Stomach (tissue), 19 donors: ENCODE measurements at regions of chr2 and their contacts with region 1.

Region 1: GRCh38 chr2:100832885-100833284 is 12.9 kb downstream of the NPAS2 start:
- DNase-seq: no peak
- H3K4me3 ChIP-seq: no peak overlapping the region
- H3K27ac ChIP-seq: peak overlapping the region; percentile 5 to 76 (median 43)
- H3K4me1 ChIP-seq: peaks cover 27 to 53% (median 44%) of the 10 kb centered on the region in 4 donors
- H3K27me3 ChIP-seq: no peaks in the 10 kb centered on the region
- CTCF ChIP-seq: no peak
- EP300 ChIP-seq: no peak
- POLR2A ChIP-seq: no peak

Region 2: DNA sequence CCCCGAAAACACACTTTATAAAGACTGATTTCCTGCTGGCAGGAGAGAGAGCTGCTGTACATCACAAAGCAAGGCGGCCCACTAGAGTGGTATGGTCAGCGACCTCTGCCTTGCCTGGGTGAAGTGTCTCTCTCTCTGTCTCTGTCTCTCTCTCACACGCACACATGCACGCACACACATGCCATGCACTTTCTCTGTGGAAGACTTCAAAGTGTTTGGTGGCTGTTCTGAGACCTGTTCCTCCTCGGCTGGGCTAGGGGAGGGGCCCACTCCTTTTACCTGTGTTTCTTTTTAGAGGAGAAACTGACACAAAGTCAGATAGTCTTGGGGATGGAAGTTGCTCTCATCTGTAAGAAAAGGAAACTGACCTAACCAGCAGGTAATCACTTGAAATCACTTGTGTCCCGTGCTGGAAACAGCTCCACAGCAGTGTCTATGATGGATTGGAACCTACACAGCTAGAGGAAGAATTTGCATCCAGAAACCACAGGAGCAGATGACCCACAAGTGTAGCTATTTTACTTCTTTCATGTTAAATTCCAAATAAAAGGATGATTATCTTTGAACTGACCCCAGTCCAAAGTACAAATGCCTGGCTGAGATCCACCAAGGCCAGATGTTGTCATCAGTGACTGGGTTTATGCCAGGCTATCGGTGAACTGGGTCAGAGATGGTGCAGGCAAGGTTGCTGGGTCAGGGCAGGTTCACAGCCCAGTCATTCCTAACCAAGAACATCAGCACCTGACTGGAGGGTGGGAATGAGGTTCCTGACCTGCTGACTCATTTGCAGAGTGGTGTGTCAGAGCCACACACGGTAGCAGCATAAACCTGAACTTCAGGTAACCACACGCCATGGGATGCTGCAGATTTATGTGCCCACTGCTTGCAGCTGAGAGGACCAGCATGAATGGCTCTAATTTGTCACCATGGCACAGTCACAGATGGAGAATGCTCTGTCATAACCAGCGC is 50.0 kb after region 1 on chr2:
- intact Hi-C with region 1: loop called (anchors 10 kb)
- DNase-seq: peak; percentile 28 to 63
- H3K4me3 ChIP-seq: no peak overlapping the region
- H3K27ac ChIP-seq: peak overlapping the region in 4 of 5 donors; percentile 19 to 54 (median 36)
- H3K4me1 ChIP-seq: peaks cover 35 to 85% (median 61%) of the 10 kb centered on the region in 4 donors
- H3K27me3 ChIP-seq: no peaks in the 10 kb centered on the region
- CTCF ChIP-seq: no peak
- EP300 ChIP-seq: no peak
- POLR2A ChIP-seq: no peak

Region 3: GRCh38 chr2:101036562-101037457 is 203.9 kb after region 1 on chr2:
- intact Hi-C with region 1: no loop called
- DNase-seq: peak in 1 of 2 donors; percentile 57
- H3K4me3 ChIP-seq: no peak overlapping the region
- H3K27ac ChIP-seq: no peak overlapping the region
- H3K4me1 ChIP-seq: peaks cover 0 to 6% (median 0%) of the 10 kb centered on the region in 4 donors
- H3K27me3 ChIP-seq: no peaks in the 10 kb centered on the region
- CTCF ChIP-seq: peak in 5 of 7 experiments; percentile 22 to 50 (median 46)
- EP300 ChIP-seq: no peak
- POLR2A ChIP-seq: no peak